Activated CD8-positive, alpha-beta T cell treated with anti-CD3 and anti-CD28 coated beads, Interleukin-2, amount 10 ng/mL, durations not matched to agents 7 days and 5 days (primary cell): ENCODE measurements at regions of chr1 and their contacts with region 1.

Region 1: GRCh38 chr1:229227298-229227919 is 43.5 kb upstream of the RAB4A start:
- DNase-seq: peak; percentile 86
- ATAC-seq: peak; percentile 80
- H3K4me3 Mint-ChIP-seq: no peak overlapping the region
- H3K27ac Mint-ChIP-seq: no peak overlapping the region
- H3K4me1 Mint-ChIP-seq: peaks cover 10% of the 10 kb centered on the region
- H3K27me3 Mint-ChIP-seq: peaks cover 10% of the 10 kb centered on the region

Region 2: GRCh38 chr1:228691926-228692325 is 535.5 kb before region 1 on chr1:
- CTCF ChIA-PET with region 1: interaction called, 25 read pairs
- POLR2A ChIA-PET with region 1: no interaction called
- DNase-seq: peak; percentile 51
- ATAC-seq: no peak
- H3K4me3 Mint-ChIP-seq: no peak overlapping the region
- H3K27ac Mint-ChIP-seq: no peak overlapping the region
- H3K4me1 Mint-ChIP-seq: peaks cover 10% of the 10 kb centered on the region
- H3K27me3 Mint-ChIP-seq: peaks cover 30% of the 10 kb centered on the region

Region 3: DNA sequence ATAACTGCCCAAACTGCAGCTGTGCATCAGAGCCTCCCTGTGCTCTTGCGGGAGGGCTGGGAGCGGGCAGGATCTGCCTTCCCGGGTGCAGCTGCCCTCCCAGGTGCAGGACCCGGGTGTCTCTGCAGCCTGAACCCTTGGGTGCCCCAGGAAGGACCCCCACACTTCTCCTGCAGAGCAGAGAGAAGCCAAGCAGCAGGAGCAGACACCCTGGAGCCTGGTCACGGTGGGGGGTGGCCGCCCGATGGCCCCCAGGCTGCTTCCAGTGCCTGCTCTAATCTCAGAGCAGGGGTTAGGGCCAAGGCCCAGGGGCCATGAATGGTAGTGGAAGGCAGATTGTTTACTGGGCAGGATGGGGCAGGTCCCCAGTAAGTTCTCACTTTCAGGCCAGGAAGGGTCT is 409.1 kb before region 1 on chr1:
- CTCF ChIA-PET with region 1: no interaction called
- POLR2A ChIA-PET with region 1: no interaction called
- DNase-seq: no peak
- ATAC-seq: no peak
- H3K4me3 Mint-ChIP-seq: no peak overlapping the region
- H3K27ac Mint-ChIP-seq: no peak overlapping the region
- H3K4me1 Mint-ChIP-seq: no peaks in the 10 kb centered on the region
- H3K27me3 Mint-ChIP-seq: peaks cover 2% of the 10 kb centered on the region

Region 4: GRCh38 chr1:228842094-228842775 is 385.2 kb before region 1 on chr1:
- CTCF ChIA-PET with region 1: no interaction called
- POLR2A ChIA-PET with region 1: no interaction called
- DNase-seq: no peak
- ATAC-seq: no peak
- H3K4me3 Mint-ChIP-seq: no peak overlapping the region
- H3K27ac Mint-ChIP-seq: no peak overlapping the region
- H3K4me1 Mint-ChIP-seq: peaks cover 12% of the 10 kb centered on the region
- H3K27me3 Mint-ChIP-seq: no peaks in the 10 kb centered on the region

Region 5: DNA sequence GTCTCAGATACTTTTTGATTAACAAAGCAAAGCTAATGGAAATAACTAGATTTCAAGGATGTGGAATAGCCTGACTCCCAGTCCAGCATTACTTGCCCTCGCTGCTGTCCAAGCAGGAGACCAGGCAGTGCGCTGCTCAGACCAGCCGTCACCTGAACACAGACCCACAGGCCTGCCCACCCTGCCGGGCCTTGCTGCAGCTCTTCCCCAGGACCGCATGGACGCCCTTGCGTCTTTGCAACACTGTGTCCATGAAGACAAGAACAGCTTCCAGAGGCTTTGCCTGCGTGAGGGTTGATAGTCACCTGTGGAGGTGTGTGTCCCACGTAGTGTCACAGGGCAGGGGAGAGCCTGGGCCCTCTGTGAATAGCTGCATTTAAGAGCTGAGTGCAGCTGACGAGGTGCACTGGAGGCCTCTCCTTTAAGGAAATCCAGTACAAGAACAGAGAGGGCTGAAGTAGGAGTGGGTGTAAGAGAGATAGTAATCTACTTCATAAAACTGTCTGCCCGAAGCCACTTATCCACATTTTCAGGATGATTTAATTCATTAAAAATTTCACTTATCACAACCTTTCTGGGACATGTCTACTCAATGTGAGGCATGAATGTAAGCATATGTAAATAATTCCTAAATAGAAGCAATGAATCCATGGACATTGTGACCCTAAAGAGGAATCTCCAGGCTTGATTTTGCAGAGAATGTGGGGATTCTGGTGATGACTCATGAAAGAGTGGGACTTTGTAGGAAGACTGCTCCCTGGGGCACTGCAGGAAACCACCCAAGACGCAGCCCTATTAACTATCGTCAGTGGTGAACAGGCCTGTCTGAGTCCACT is 132.7 kb before region 1 on chr1:
- CTCF ChIA-PET with region 1: interaction called, 13 read pairs
- POLR2A ChIA-PET with region 1: no interaction called
- DNase-seq: no peak
- ATAC-seq: no peak
- H3K4me3 Mint-ChIP-seq: no peak overlapping the region
- H3K27ac Mint-ChIP-seq: no peak overlapping the region
- H3K4me1 Mint-ChIP-seq: peaks cover 9% of the 10 kb centered on the region
- H3K27me3 Mint-ChIP-seq: peaks cover 2% of the 10 kb centered on the region

Region 6: GRCh38 chr1:229156872-229157271 is 70.5 kb before region 1 on chr1:
- CTCF ChIA-PET with region 1: interaction called, 10 read pairs
- POLR2A ChIA-PET with region 1: no interaction called
- DNase-seq: no peak
- ATAC-seq: no peak
- H3K4me3 Mint-ChIP-seq: no peak overlapping the region
- H3K27ac Mint-ChIP-seq: no peak overlapping the region
- H3K4me1 Mint-ChIP-seq: peaks cover 20% of the 10 kb centered on the region
- H3K27me3 Mint-ChIP-seq: no peaks in the 10 kb centered on the region

Region 7: GRCh38 chr1:229192031-229192430 is 35.4 kb before region 1 on chr1:
- CTCF ChIA-PET with region 1: interaction called, 11 read pairs
- POLR2A ChIA-PET with region 1: no interaction called
- DNase-seq: no peak
- ATAC-seq: no peak
- H3K4me3 Mint-ChIP-seq: no peak overlapping the region
- H3K27ac Mint-ChIP-seq: no peak overlapping the region
- H3K4me1 Mint-ChIP-seq: peaks cover 15% of the 10 kb centered on the region
- H3K27me3 Mint-ChIP-seq: peaks cover 18% of the 10 kb centered on the region

Region 8: GRCh38 chr1:229270547-229271447 is 43.4 kb after region 1 on chr1 and contains the start of gene RAB4A:
- CTCF ChIA-PET with region 1: no interaction called
- POLR2A ChIA-PET with region 1: no interaction called
- DNase-seq: peak; percentile 80
- ATAC-seq: peak; percentile 90
- H3K4me3 Mint-ChIP-seq: peak within 1 kb of the TSS; percentile 84
- H3K27ac Mint-ChIP-seq: peak within 1 kb of the TSS; percentile 86
- H3K4me1 Mint-ChIP-seq: peaks cover 29% of the 10 kb centered on the region
- H3K27me3 Mint-ChIP-seq: no peaks in the 10 kb centered on the region
- total RNA-seq, gene RAB4A: 40.4 to 41.7 TPM

Region 9: GRCh38 chr1:229296541-229296941 is 69.1 kb after region 1 on chr1:
- CTCF ChIA-PET with region 1: no interaction called
- POLR2A ChIA-PET with region 1: no interaction called
- DNase-seq: no peak
- ATAC-seq: no peak
- H3K4me3 Mint-ChIP-seq: no peak overlapping the region
- H3K27ac Mint-ChIP-seq: peak overlapping the region; percentile 39
- H3K4me1 Mint-ChIP-seq: no peaks in the 10 kb centered on the region
- H3K27me3 Mint-ChIP-seq: no peaks in the 10 kb centered on the region